ENCODE measurements at regions of chr5 and their contacts with region 1.

Region 1: DNA sequence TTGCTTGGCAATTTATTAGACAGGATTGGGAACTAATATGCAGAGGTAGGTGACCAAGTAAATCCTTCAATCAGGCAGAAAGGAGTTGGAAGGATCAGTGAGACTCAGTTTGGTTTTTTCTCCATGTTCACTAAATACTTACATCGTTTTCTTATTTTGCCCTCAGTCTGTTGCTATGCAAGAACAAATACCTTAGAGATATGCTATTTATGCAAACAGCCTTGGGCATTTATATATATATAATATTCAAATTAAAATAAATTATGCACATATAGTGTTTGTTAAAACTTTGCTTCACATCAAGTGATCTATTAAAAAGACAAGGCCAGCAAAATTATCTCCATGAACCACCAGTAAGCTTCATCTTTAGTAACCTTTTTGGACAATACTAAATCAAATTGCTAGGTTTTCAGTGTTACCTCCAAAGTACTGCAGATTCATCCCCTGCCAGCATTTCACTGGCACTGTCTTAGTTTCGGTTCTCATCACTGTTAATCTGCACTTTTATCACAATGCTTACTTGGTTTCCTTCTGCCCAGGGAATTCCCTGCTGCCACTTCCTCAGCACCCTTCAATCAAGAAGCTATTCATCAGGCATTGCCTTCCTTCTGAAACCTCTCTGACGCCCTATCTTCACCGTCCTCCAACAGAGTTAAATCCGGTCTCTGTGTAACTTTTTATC is 26.0 kb upstream of the LIFR start:
- DNase-seq: no peak
- ATAC-seq: no peak

Region 2: GRCh38 chr5:38291355-38291754 is 291.1 kb before region 1 on chr5:
- intact Hi-C with region 1: no loop called
- DNase-seq: no peak
- ATAC-seq: no peak

Region 3: DNA sequence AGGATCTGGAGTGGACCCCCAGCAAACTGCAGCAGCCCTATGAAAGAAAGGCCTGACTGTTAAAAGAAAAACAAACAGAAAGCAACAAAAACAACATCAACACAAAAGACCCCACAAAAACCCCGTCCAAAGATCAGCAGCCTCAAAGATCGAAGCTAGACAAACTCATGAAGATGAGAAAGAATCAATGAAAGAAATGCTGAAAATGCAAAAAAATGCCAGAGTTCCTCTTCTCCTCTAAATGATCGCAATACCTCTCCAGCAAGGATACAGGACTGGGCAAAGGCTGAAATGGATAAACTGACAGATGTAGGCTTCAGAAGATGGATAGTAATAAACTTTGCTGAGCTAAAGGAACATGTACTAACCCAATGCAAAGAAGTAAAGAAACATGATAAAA is 1368.6 kb after region 1 on chr5:
- intact Hi-C with region 1: loop called (anchors 5 kb)
- DNase-seq: no peak
- ATAC-seq: no peak